ENCODE measurements at regions of chr6 and their contacts with region 1.

Region 1: GRCh38 chr6:17610835-17611234 is 10.7 kb downstream of the FAM8A1 start:
- DNase-seq: no peak
- ATAC-seq: no peak
- H3K4me3 ChIP-seq: no peak overlapping the region
- H3K4me3 Mint-ChIP-seq: no peak overlapping the region
- H3K27ac ChIP-seq: no peak overlapping the region
- H3K27ac Mint-ChIP-seq: peak overlapping the region; percentile 21
- H3K4me1 ChIP-seq: no peaks in the 10 kb centered on the region
- H3K4me1 Mint-ChIP-seq: peaks cover 6% of the 10 kb centered on the region
- H3K27me3 ChIP-seq: no peaks in the 10 kb centered on the region
- H3K27me3 Mint-ChIP-seq: no peaks in the 10 kb centered on the region
- CTCF ChIP-seq: no peak

Region 2: DNA sequence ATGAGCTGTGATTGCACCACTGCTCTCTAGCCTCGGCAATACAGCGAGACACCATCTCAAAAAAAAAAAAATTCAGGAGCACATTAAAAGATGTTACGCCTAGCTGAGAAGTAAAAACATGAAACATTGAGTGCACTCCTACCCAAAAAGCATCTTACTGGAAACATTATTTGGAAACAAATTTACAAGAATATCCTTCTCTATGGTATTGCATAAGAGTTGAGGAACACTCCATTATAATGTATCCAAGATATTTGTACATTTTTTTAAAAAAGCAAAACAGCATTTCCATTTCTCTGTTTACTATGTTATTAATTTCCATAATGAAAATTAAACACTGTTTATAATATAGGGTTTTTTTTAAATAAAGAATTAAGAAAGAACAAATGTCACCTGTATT is 37.9 kb after region 1 on chr6:
- CTCF ChIA-PET with region 1: no interaction called
- POLR2A ChIA-PET with region 1: no interaction called
- intact Hi-C with region 1: loop called in 1 of 2 experiments (anchors 5 kb)
- DNase-seq: no peak
- ATAC-seq: no peak
- H3K4me3 ChIP-seq: no peak overlapping the region
- H3K4me3 Mint-ChIP-seq: no peak overlapping the region
- H3K27ac ChIP-seq: no peak overlapping the region
- H3K27ac Mint-ChIP-seq: no peak overlapping the region
- H3K4me1 ChIP-seq: no peaks in the 10 kb centered on the region
- H3K4me1 Mint-ChIP-seq: peaks cover 4% of the 10 kb centered on the region
- H3K27me3 ChIP-seq: no peaks in the 10 kb centered on the region
- H3K27me3 Mint-ChIP-seq: no peaks in the 10 kb centered on the region
- CTCF ChIP-seq: no peak

Measured in CD4-positive, alpha-beta T cell (primary cell).